AG04450 (cell line): ENCODE measurements at regions of chr6 and their contacts with region 1.

Region 1: GRCh38 chr6:141677598-141678211 is 455.0 kb upstream of the GJE1 start:
- DNase-seq: no peak
- H3K4me3 ChIP-seq: no peak overlapping the region
- H3K27ac ChIP-seq: no peak overlapping the region
- H3K27me3 ChIP-seq: no peaks in the 10 kb centered on the region
- CTCF ChIP-seq: peak; percentile 83

Region 2: GRCh38 chr6:140627002-140627401 is 1050.7 kb before region 1 on chr6:
- CTCF ChIA-PET with region 1: interaction called, 12 read pairs
- POLR2A ChIA-PET with region 1: no interaction called
- DNase-seq: no peak
- H3K4me3 ChIP-seq: no peak overlapping the region
- H3K27ac ChIP-seq: no peak overlapping the region
- H3K27me3 ChIP-seq: no peaks in the 10 kb centered on the region
- CTCF ChIP-seq: no peak

Region 3: GRCh38 chr6:142112451-142113061 is 434.9 kb after region 1 on chr6:
- CTCF ChIA-PET with region 1: interaction called, 27 read pairs
- POLR2A ChIA-PET with region 1: no interaction called
- DNase-seq: peak; percentile 53
- H3K4me3 ChIP-seq: no peak overlapping the region
- H3K27ac ChIP-seq: no peak overlapping the region
- H3K27me3 ChIP-seq: no peaks in the 10 kb centered on the region
- CTCF ChIP-seq: peak; percentile 85